Gastrocnemius medialis (tissue), 4 donors: ENCODE measurements at regions of chr11 and their contacts with region 1.

Region 1: DNA sequence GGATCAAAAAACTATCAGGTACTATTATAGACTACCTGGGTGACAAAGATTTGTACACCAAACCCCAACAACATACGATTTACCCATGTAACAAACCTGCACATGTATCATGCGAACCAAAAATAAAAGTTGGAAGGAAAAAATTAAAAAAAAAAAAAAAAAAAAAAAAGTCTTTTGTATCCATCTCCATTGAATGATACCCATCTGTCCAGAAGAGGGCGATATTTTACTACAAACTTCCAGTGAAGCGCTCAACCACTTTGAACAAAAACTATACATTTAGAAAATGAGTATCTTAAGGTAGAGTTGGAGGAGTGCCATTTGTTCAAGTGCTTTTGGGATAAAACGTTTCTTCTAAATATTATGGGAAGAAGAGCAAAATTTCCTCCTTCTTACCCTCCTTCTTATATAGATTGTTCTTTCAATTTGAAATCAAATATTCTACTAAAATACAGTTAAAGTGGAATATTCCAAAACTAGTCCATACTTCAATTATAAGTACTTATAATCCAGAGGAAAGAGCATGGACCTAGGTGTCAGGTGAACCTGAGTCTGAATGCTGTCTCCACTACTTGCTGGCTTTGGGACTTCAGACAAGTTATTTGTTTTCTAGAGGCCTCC is 23.3 kb downstream of the ARL14EP start:
- DNase-seq: no peak
- ATAC-seq: peak in 1 of 2 donors; percentile 56
- H3K4me3 ChIP-seq: no peak overlapping the region
- H3K27ac ChIP-seq: no peak overlapping the region
- H3K4me1 ChIP-seq: no peaks in the 10 kb centered on the region
- H3K27me3 ChIP-seq: no peaks in the 10 kb centered on the region
- CTCF ChIP-seq: peak; percentile 43 to 71 (median 60)
- POLR2A ChIP-seq: no peak

Region 2: DNA sequence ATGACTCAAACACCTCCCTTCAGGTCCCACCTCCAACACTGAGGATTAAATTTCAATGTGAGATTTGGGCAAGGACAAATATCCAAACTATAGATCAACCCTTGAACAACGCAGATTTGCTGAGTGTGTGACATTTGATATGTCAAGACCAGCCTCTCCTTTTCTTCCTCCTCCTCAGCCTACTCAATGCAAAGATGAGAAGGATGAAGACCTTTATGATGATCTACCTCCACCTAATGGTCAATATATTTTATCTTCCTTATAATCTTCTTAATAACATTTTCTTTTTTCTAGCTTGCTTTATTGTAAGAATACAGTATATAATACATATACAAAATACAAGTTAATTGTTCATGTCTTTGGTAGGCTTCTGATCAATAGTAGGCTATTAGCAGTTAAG is 307.4 kb after region 1 on chr11:
- in situ Hi-C with region 1: no loop called
- intact Hi-C with region 1: loop called (anchors 2 kb)
- DNase-seq: no peak
- ATAC-seq: no peak
- H3K4me3 ChIP-seq: no peak overlapping the region
- H3K27ac ChIP-seq: no peak overlapping the region
- H3K4me1 ChIP-seq: no peaks in the 10 kb centered on the region
- H3K27me3 ChIP-seq: no peaks in the 10 kb centered on the region
- CTCF ChIP-seq: peak in 1 of 5 experiments; percentile 24
- POLR2A ChIP-seq: no peak

Region 3: GRCh38 chr11:30855383-30856006 is 509.3 kb after region 1 on chr11:
- in situ Hi-C with region 1: loop called in 2 of 4 experiments (anchors 5 kb)
- intact Hi-C with region 1: loop called (anchors 2 kb)
- DNase-seq: no peak
- ATAC-seq: no peak
- H3K4me3 ChIP-seq: no peak overlapping the region
- H3K27ac ChIP-seq: no peak overlapping the region
- H3K4me1 ChIP-seq: peaks cover 0 to 5% of the 10 kb centered on the region in 2 donors
- H3K27me3 ChIP-seq: no peaks in the 10 kb centered on the region
- CTCF ChIP-seq: peak; percentile 33 to 56 (median 39)
- POLR2A ChIP-seq: no peak